Caco-2 (cell line): ENCODE measurements at regions of chr7 and their contacts with region 1.

Region 1: GRCh38 chr7:106153891-106154449 is 41.9 kb upstream of the SYPL1 start:
- DNase-seq: peak; percentile 79 to 85
- H3K4me3 ChIP-seq: no peak overlapping the region
- H3K4me3 Mint-ChIP-seq: no peak overlapping the region
- H3K27ac Mint-ChIP-seq: no peak overlapping the region
- H3K4me1 ChIP-seq: peaks cover 34% of the 10 kb centered on the region
- H3K4me1 Mint-ChIP-seq: peaks cover 13% of the 10 kb centered on the region
- H3K27me3 ChIP-seq: no peaks in the 10 kb centered on the region
- H3K27me3 Mint-ChIP-seq: peaks cover 14% of the 10 kb centered on the region
- CTCF ChIP-seq: peak; percentile 91 to 93

Region 2: GRCh38 chr7:105934572-105935185 is 219.3 kb before region 1 on chr7:
- CTCF ChIA-PET with region 1: interaction called, 4 read pairs
- POLR2A ChIA-PET with region 1: no interaction called
- intact Hi-C with region 1: loop called (anchors 2 kb)
- DNase-seq: peak; percentile 50 to 59
- H3K4me3 ChIP-seq: no peak overlapping the region
- H3K4me3 Mint-ChIP-seq: no peak overlapping the region
- H3K27ac Mint-ChIP-seq: no peak overlapping the region
- H3K4me1 ChIP-seq: no peaks in the 10 kb centered on the region
- H3K4me1 Mint-ChIP-seq: peaks cover 1% of the 10 kb centered on the region
- H3K27me3 ChIP-seq: no peaks in the 10 kb centered on the region
- H3K27me3 Mint-ChIP-seq: no peaks in the 10 kb centered on the region
- CTCF ChIP-seq: peak; percentile 38 to 68

Region 3: DNA sequence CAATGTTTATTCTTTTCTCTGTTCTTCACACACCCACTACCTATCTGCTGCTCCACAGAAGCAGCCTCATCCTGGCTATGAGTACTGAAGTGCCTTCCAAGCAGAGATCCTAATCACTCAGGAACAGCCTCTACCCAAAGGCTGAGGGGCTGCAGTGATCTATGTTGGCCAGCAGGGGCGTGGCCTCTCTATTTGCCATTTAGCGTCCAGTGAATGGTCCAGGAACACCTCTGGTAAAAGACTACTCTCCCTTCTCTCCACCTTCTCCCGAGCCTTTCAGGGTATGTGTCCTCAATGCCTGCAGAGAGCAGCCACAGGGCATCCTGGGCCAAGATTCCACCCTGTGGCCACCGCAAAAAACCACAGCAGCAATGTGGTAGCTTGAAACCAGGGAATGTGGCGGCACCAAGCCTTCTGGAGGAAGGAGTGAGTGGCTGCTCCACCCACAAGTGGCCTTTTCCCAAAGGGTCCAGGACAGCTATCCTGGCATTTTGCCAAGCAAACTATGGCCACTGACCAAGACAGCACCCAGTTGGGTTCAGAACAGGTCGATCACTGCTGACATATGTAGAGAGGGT is 112.7 kb before region 1 on chr7:
- CTCF ChIA-PET with region 1: interaction called, 12 read pairs
- POLR2A ChIA-PET with region 1: no interaction called
- intact Hi-C with region 1: no loop called
- DNase-seq: peak; percentile 56 to 61
- H3K4me3 ChIP-seq: no peak overlapping the region
- H3K4me3 Mint-ChIP-seq: no peak overlapping the region
- H3K27ac Mint-ChIP-seq: no peak overlapping the region
- H3K4me1 ChIP-seq: no peaks in the 10 kb centered on the region
- H3K4me1 Mint-ChIP-seq: peaks cover 6% of the 10 kb centered on the region
- H3K27me3 ChIP-seq: no peaks in the 10 kb centered on the region
- H3K27me3 Mint-ChIP-seq: peaks cover 9% of the 10 kb centered on the region
- CTCF ChIP-seq: peak; percentile 79 to 87

Region 4: GRCh38 chr7:106071356-106071998 is 82.5 kb before region 1 on chr7:
- CTCF ChIA-PET with region 1: interaction called, 5 read pairs
- POLR2A ChIA-PET with region 1: no interaction called
- intact Hi-C with region 1: loop called (anchors 5 kb)
- DNase-seq: no peak
- H3K4me3 ChIP-seq: no peak overlapping the region
- H3K4me3 Mint-ChIP-seq: peak overlapping the region; percentile 28
- H3K27ac Mint-ChIP-seq: peak overlapping the region; percentile 29
- H3K4me1 ChIP-seq: peaks cover 38% of the 10 kb centered on the region
- H3K4me1 Mint-ChIP-seq: peaks cover 28% of the 10 kb centered on the region
- H3K27me3 ChIP-seq: no peaks in the 10 kb centered on the region
- H3K27me3 Mint-ChIP-seq: no peaks in the 10 kb centered on the region
- CTCF ChIP-seq: no peak

Region 5: GRCh38 chr7:106112117-106112971 is 41.6 kb before region 1 on chr7 and contains the start of gene SYPL1:
- CTCF ChIA-PET with region 1: interaction called, 7 read pairs
- POLR2A ChIA-PET with region 1: interaction called, 4 read pairs
- intact Hi-C with region 1: loop called (anchors 2 kb)
- DNase-seq: peak; percentile 96
- H3K4me3 ChIP-seq: peak within 1 kb of the TSS; percentile 59
- H3K4me3 Mint-ChIP-seq: peak within 1 kb of the TSS; percentile 90
- H3K27ac Mint-ChIP-seq: peak within 1 kb of the TSS; percentile 88
- H3K4me1 ChIP-seq: peaks cover 25% of the 10 kb centered on the region
- H3K4me1 Mint-ChIP-seq: peaks cover 18% of the 10 kb centered on the region
- H3K27me3 ChIP-seq: no peaks in the 10 kb centered on the region
- H3K27me3 Mint-ChIP-seq: no peaks in the 10 kb centered on the region
- CTCF ChIP-seq: peak in 1 of 2 experiments; percentile 19
- total RNA-seq, gene SYPL1: 78.7 and 81.0 TPM in 2 replicates